Left cardiac atrium (tissue), 4 donors: ENCODE measurements at regions of chr15 and their contacts with region 1.

Region 1: GRCh38 chr15:91942676-91943576 is 89.4 kb downstream of the SLCO3A1 start:
- DNase-seq: peak; percentile 83
- ATAC-seq: peak; percentile 76 to 85

Region 2: DNA sequence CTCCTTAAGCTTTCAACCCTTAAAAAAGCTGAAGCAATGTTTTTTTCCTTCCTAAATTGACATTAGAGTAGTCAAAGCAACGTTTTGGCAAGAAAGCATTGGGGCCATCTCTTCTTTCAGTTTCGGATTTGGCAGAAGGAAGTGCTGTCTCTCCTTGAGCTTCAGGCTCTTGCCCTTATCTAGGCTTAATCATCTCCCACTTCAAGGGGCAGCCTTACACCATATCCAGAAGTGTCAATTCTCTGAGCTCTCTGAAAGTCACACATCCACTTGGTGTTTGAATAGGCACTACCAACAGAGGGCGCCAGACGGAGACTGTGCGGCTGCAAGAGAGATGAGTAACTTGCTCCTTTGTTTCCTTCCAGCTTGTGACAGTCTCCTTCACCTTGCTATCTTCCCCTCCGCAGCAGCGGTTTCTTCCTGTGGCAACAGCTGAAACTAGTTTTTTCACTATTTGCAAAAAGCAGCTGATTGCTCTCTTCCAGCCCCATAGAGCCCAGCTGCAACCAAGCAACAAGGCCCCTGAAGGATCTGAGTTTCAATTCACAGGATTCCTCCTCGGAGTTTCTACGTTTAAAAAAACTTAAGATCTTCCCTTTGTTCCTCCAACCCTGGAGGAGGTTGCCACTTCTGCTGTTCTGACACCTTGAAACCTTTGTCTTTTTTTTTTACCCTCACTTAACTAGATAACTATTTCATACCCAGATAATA is 236.4 kb before region 1 on chr15:
- intact Hi-C with region 1: loop called in 1 of 2 experiments (anchors 10 kb)
- DNase-seq: peak; percentile 85
- ATAC-seq: peak; percentile 82 to 88

Region 3: DNA sequence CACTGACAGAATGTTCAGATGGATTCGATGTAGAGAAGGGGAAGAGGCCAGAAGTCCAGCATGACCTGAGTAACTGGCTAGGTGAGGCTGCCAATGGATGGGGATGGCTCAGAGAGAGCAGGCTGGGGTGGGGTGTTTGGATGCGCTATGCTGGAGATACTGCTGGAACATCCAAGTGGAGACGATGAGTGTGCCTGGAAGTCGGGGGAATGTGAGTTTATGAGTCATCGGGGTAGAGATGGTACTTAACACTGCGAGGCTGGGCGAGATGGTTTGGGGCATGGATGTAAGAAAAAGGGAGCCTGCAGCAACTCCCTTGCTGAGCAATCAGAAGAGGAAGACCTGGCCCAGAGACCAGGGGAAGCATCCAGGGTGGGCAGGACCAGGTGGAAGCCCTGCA is 91.3 kb after region 1 on chr15:
- intact Hi-C with region 1: no loop called
- DNase-seq: no peak
- ATAC-seq: peak in 1 of 2 donors; percentile 77

Region 4: DNA sequence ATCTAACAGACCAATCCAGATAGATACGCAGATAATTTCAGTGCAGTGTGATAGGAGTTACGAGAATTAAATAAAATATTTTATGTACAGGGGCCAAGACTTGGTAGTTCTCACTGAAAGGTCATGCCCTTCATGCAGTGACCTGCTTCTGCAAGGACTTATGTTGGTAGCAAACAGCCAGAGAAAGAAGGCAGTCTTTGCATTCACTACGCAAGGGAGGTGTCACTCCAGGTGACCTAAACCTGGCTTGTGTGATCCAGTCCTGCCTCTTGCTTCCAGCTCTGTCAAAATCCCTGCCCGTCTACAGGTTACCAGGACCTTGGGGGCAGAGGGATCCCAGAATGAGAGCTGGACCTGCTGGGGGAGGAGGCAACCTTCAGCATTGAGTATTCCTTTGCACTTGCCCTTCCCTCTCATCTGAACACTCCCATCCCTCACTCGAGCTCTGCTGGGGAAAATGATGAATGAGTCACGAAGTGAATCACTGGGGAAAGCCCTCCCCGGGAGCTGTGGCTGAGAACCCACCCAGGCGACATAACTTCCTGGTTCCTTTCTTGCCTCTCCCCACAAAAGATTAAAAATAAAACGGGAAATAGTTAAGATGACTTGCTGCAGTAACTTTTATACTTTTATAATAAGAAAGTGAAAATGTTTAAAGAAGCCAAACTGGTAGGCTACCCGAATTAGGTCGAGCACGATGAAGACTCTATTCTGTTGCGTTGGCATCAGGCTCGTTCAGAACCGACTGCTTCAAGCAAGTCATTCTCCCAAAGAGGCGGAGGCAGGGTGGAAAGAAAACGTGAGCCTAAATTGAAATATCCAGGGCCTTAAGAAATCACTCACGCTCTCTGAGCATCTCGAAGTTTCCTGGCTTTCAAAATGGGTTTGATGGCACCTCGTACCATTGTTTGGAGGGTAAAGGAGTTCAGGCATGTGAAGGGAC is 126.7 kb after region 1 on chr15:
- intact Hi-C with region 1: no loop called
- DNase-seq: peak; percentile 55
- ATAC-seq: peak; percentile 63 to 95